ENCODE measurements at regions of chr20 and their contacts with region 1.

Region 1: DNA sequence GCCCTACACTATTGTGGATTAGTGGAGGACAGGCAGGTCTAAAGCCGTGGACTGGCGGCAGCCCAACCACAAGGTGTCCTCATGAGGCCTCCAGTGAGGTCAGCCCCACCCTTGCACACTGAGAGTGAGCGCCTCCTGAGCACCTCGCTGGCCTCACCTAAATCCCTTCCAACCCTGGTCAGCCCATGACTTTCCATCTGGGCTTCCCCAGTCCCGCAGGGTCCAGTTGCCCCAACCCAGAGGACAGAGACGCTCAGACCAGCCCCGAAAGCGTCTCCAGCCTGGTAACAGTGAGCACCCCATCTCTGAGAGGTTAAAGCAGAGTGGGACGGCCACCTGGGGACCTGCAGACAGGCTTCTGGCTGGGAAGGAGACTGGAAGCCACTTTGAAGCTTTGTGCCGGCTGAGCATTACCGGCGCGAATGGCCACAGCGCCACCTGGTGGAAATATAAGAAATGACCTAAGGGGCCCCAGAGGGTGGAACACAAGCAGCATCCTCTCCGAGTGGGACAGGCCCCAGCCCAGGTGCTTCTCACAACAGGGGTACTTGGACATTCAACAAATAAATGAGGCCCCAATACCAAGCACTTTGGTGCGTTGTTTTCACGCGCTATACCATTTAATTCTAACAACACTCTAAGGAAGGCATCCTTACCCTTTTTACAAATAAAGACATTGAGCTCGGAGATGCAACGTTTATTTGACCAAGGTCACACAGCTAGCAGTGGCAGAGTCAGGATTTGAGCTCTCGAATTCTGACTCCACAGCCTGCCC is 65.7 kb upstream of the TOP1 start:
- DNase-seq: peak; percentile 80 to 86 (median 82)
- ATAC-seq: peak; percentile 97
- H3K4me3 ChIP-seq: no peak overlapping the region
- H3K27ac ChIP-seq: no peak overlapping the region
- H3K4me1 ChIP-seq: peaks cover 0 to 4% of the 10 kb centered on the region in 2 experiments; a peak in 1 of 5 replicates
- H3K27me3 ChIP-seq: peaks cover 2 to 19% of the 10 kb centered on the region in 2 experiments; a peak in 3 of 5 replicates
- CTCF ChIP-seq: peak; percentile 84 to 91 (median 90)
- EP300 ChIP-seq: no peak
- POLR2A ChIP-seq: no peak
- RAD21 ChIP-seq: peak; percentile 76 to 83

Region 2: DNA sequence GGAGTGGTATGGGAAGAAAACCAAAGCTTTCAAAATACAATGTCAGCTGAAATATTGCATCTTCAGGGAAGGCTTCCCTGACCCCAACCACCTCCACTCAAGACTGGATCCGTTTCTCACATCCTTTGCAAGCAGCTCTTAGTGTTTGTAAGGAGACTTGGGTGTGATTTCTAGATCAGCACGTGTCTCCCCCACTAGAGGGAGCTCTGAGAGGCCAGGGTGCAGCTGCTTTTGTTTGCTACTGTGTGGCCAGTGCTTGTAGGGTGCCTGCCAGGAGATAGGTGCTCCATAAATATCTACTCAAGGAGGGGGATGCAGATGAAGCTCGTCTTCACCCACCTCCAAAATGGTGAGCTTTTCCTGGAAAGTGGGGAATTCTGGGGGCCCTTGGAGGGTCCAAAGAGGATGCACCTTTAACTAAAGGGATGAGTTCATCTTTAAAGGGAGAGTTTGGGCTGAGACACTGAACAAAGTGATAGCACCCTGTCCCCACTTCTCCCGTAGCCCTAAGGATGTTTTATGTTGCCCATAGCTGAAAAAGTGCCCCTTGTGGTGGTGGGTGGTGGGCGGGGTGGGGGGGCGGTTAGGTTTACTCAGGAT is 221.3 kb before region 1 on chr20:
- CTCF ChIA-PET with region 1: interaction called, 4 read pairs
- POLR2A ChIA-PET with region 1: interaction called, 3 read pairs
- in situ Hi-C with region 1: no loop called
- intact Hi-C with region 1: loop called (anchors 1 kb)
- DNase-seq: peak; percentile 33 to 56 (median 48)
- ATAC-seq: peak; percentile 87
- H3K4me3 ChIP-seq: no peak overlapping the region
- H3K27ac ChIP-seq: no peak overlapping the region
- H3K4me1 ChIP-seq: no peaks in the 10 kb centered on the region
- H3K27me3 ChIP-seq: peaks cover 5 to 17% of the 10 kb centered on the region in 2 experiments; a peak in 3 of 5 replicates
- CTCF ChIP-seq: peak; percentile 60 to 73 (median 66)
- EP300 ChIP-seq: no peak
- POLR2A ChIP-seq: no peak
- RAD21 ChIP-seq: peak in 1 of 2 experiments; percentile 52; a peak in 2 of 4 replicates

Region 3: GRCh38 chr20:40913224-40914185 is 49.4 kb before region 1 on chr20:
- CTCF ChIA-PET with region 1: no interaction called
- POLR2A ChIA-PET with region 1: no interaction called
- in situ Hi-C with region 1: no loop called
- intact Hi-C with region 1: no loop called
- DNase-seq: peak in 1 of 4 experiments; percentile 11
- ATAC-seq: peak; percentile 78
- H3K4me3 ChIP-seq: peak overlapping the region; percentile 16; the same call in 1 of the 2 replicates
- H3K27ac ChIP-seq: no peak overlapping the region
- H3K4me1 ChIP-seq: peaks cover 0 to 2% of the 10 kb centered on the region in 2 experiments; a peak in 2 of 5 replicates
- H3K27me3 ChIP-seq: peaks cover 0 to 7% of the 10 kb centered on the region in 2 experiments; a peak in 2 of 5 replicates
- CTCF ChIP-seq: no peak
- EP300 ChIP-seq: no peak
- POLR2A ChIP-seq: no peak
- RAD21 ChIP-seq: no peak

Measured in K562 (cell line).